Activated B cell treated with CpG ODN at 0.5 μM for 24 hours (primary cell): ENCODE measurements at regions of chr5 and their contacts with region 1.

Region 1: DNA sequence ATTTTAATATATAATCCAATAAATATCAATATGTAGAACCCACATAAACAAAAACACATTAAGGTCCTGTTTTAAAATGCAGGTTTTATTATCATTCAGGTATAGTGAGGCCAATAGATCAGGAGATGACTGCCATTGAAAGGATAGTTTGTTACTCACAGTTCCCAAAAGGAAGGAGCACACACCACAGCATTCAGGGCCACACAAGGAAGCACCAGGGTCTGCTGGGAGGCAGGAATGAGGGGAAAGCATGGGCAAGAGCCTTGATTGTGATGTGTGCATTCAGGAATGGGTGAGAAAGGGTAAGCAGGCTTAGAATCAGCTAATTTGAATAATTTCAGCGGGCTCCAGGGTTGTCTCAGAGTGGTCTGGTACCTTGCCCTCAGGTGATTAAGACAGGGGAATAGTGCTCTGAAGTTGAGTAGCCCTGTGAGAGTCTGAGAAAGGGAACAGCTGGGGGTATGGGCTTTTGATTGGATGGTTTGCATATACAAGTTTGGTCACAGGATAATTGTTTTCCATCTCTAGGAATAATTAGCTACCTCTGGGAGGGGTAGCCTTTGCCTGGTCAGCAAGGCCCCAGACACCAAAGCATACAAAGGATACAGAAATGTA is 19.8 kb upstream of the OTULIN start:
- DNase-seq: no peak
- ATAC-seq: no peak
- H3K4me3 Mint-ChIP-seq: no peak overlapping the region
- H3K27ac Mint-ChIP-seq: no peak overlapping the region
- H3K4me1 Mint-ChIP-seq: no peaks in the 10 kb centered on the region
- H3K27me3 Mint-ChIP-seq: peaks cover 21% of the 10 kb centered on the region
- CTCF ChIP-seq: no peak

Region 2: GRCh38 chr5:14351845-14352712 is 292.7 kb before region 1 on chr5:
- CTCF ChIA-PET with region 1: interaction called, 23 read pairs
- POLR2A ChIA-PET with region 1: interaction called, 3 read pairs
- intact Hi-C with region 1: loop called (anchors 1 kb)
- DNase-seq: peak; percentile 52
- ATAC-seq: peak; percentile 98
- H3K4me3 Mint-ChIP-seq: no peak overlapping the region
- H3K27ac Mint-ChIP-seq: no peak overlapping the region
- H3K4me1 Mint-ChIP-seq: peaks cover 26% of the 10 kb centered on the region
- H3K27me3 Mint-ChIP-seq: no peaks in the 10 kb centered on the region
- CTCF ChIP-seq: peak; percentile 87

Region 3: GRCh38 chr5:14399054-14399692 is 245.6 kb before region 1 on chr5:
- CTCF ChIA-PET with region 1: interaction called, 62 read pairs
- POLR2A ChIA-PET with region 1: no interaction called
- intact Hi-C with region 1: loop called (anchors 1 kb)
- DNase-seq: no peak
- ATAC-seq: no peak
- H3K4me3 Mint-ChIP-seq: no peak overlapping the region
- H3K27ac Mint-ChIP-seq: no peak overlapping the region
- H3K4me1 Mint-ChIP-seq: no peaks in the 10 kb centered on the region
- H3K27me3 Mint-ChIP-seq: no peaks in the 10 kb centered on the region
- CTCF ChIP-seq: peak; percentile 23

Region 4: DNA sequence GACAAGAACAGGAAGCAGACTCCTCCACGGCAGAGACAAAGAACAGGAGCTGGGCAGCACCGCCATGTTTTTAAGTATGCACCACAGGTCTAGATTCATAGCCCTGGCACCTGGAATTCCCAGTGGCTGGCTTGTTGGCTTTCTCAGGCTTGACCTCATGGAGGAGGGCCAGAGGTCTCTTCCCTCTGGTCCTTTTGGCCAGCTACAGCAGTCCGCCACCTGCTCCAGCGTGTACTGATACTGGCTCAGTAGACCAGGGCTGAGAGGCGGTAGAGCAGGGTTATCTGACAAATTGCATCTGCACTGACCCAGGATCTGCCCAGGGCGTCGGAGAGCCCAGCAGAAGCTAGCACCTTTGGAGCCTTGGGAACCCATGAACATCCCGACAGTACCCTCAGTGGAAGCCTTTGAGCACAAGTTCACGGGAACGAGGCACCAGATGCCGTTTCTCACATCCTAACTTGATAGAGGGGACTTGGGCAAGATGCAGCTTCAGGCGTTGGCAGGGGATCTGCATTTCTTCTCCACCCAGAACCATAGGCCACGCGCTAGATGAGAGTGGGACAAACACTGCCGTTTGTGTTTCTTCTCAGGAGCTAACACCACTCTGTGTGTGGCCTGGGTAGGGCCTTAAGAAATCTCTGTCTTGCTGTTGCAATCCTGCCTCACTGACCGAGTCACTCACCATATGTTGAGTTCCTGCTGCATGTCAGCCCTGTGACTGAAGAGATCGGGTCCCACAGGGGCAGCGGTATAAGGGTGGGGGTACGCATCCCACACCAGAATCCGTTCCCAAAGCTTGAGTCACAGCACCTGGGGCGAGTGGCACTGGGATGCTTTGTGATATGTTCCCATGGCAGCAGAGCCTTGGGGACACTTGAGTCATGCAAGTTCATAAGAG is 153.5 kb before region 1 on chr5:
- CTCF ChIA-PET with region 1: no interaction called
- POLR2A ChIA-PET with region 1: no interaction called
- intact Hi-C with region 1: loop called (anchors 5 kb)
- DNase-seq: no peak
- ATAC-seq: no peak
- H3K4me3 Mint-ChIP-seq: no peak overlapping the region
- H3K27ac Mint-ChIP-seq: no peak overlapping the region
- H3K4me1 Mint-ChIP-seq: no peaks in the 10 kb centered on the region
- H3K27me3 Mint-ChIP-seq: no peaks in the 10 kb centered on the region
- CTCF ChIP-seq: no peak

Region 5: DNA sequence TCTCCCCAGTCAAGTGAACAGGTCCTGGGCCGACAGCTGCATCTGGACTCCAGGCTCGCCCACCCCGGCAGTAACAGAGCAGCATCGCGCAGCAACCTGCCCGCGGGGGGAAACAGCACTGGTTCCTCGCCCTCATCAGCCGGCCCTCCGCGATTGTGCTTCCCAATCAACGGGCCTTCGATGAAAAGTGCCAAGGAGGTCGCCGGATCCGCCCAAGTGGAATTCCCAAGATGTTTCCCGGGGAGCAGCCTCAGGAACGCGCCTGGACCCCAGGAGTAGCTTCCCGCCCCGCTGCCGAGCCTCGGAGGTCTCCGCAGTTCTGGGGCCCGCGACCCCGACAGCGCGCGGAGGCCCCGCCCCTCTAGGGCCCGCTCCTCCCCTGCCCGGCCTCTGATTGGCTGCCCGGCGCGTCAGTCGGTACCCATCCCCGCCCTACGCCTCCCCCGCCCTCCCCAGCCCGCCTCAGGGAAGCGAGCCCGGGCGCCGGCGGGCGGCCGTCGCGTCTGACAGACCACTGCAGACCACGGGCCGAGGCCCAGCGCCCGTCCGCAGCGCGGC is 63.3 kb before region 1 on chr5 and contains the start of gene OTULINL:
- CTCF ChIA-PET with region 1: interaction called, 5 read pairs
- POLR2A ChIA-PET with region 1: no interaction called
- intact Hi-C with region 1: loop called (anchors 5 kb)
- DNase-seq: peak; percentile 80
- ATAC-seq: peak; percentile 98
- H3K4me3 Mint-ChIP-seq: peak within 1 kb of the TSS; percentile 74
- H3K27ac Mint-ChIP-seq: no peak within 1 kb of the TSS
- H3K4me1 Mint-ChIP-seq: peaks cover 3% of the 10 kb centered on the region
- H3K27me3 Mint-ChIP-seq: peaks cover 25% of the 10 kb centered on the region
- CTCF ChIP-seq: no peak
- total RNA-seq, gene OTULINL: 0.27 and 0.69 TPM in 2 replicates

Region 6: DNA sequence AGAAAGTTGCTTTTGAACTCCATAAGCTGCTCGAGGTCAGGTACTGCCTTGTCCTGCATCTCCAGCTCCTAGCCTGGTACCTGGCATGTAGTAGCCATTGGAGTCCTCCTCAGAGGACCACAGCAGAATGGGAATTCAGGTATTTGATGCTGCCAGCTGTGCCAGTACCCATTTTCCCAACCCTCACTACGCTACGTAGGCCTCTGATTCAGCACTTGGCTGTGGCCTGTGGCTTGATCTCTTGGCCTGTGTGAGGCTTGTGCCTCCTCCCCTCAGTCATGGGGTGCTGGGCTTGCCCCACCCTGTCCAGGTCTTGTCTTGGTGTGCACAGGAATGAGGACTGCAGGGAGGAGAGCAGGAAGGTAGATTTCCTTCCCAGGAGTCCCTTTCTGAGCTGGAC is 31.6 kb after region 1 on chr5:
- CTCF ChIA-PET with region 1: interaction called, 10 read pairs
- POLR2A ChIA-PET with region 1: no interaction called
- intact Hi-C with region 1: no loop called
- DNase-seq: no peak
- ATAC-seq: peak; percentile 53
- H3K4me3 Mint-ChIP-seq: peak overlapping the region; percentile 76
- H3K27ac Mint-ChIP-seq: peak overlapping the region; percentile 86
- H3K4me1 Mint-ChIP-seq: peaks cover 86% of the 10 kb centered on the region
- H3K27me3 Mint-ChIP-seq: no peaks in the 10 kb centered on the region
- CTCF ChIP-seq: no peak

Region 7: DNA sequence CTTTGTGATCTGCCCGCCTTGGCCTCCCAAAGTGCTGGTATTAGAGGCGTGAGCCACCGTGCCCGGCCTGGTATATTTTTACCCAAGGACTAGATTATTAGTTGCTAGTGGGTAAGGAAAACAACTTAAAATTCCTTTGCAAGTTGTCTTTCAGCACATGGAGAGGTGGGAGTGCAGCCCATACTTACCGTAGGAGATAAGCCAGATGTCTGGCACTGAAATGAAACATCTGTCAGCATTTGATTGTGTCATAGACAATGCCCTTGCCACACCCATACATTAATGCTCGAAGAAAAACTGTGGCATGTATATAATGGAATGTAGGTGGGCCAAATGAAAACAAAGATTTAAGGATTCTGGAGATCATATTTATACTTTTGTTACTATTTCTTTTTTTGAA is 263.5 kb after region 1 on chr5:
- CTCF ChIA-PET with region 1: no interaction called
- POLR2A ChIA-PET with region 1: no interaction called
- intact Hi-C with region 1: no loop called
- DNase-seq: no peak
- ATAC-seq: no peak
- H3K4me3 Mint-ChIP-seq: no peak overlapping the region
- H3K27ac Mint-ChIP-seq: no peak overlapping the region
- H3K4me1 Mint-ChIP-seq: no peaks in the 10 kb centered on the region
- H3K27me3 Mint-ChIP-seq: peaks cover 5% of the 10 kb centered on the region
- CTCF ChIP-seq: no peak

Region 8: DNA sequence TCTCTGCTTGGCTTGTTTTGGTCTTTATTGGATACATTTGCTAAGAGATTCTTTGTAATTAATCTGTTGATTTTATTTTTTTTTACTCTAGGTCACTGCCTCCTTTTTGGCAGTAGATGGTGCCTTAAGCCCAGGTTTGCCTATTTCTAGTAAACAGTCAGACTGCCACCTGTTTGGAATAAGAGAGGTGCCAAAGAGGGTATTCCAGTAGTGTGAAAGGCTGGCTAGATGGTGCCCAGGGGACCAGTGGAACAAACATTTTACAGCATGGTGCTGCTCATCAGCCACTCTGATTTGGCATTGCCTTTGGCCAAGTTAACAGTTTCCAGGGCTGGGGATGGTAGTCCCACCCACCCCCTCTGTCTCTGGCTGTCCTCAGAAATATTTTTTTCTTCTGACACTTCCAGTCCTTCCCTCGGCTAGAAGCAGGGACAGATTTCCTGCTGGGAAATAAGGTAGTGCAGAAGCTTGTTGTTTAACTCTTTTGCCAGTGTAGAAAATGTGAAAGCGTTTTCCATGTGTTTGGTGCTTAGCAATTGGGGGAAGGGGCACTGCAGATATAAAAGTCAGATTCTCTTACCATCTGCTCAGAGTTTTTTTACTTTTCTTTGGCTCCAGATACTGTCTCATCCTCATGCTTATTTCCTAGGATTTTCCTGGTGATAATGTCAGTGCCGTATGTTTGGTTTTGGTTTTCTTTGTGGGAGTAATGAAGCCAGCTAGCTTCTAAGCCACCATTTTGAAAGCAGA is 818.7 kb after region 1 on chr5:
- CTCF ChIA-PET with region 1: no interaction called
- POLR2A ChIA-PET with region 1: no interaction called
- intact Hi-C with region 1: no loop called
- DNase-seq: no peak
- ATAC-seq: no peak
- H3K4me3 Mint-ChIP-seq: no peak overlapping the region
- H3K27ac Mint-ChIP-seq: no peak overlapping the region
- H3K4me1 Mint-ChIP-seq: no peaks in the 10 kb centered on the region
- H3K27me3 Mint-ChIP-seq: no peaks in the 10 kb centered on the region
- CTCF ChIP-seq: no peak